ENCODE measurements at regions of chr4 and their contacts with region 1.

Region 1: GRCh38 chr4:6568689-6569332 is 6.2 kb upstream of the MAN2B2 start:
- DNase-seq: no peak
- ATAC-seq: no peak

Region 2: GRCh38 chr4:7423801-7424552 is 855.2 kb after region 1 on chr4:
- intact Hi-C with region 1: no loop called
- DNase-seq: peak; percentile 34
- ATAC-seq: no peak

Region 3: GRCh38 chr4:8409264-8410065 is 1840.7 kb after region 1 on chr4:
- intact Hi-C with region 1: loop called (anchors 5 kb)
- DNase-seq: peak; percentile 74
- ATAC-seq: peak; percentile 71

Measured in sciatic nerve (tissue), 2 donors.